Mammary epithelial cell (primary cell): ENCODE measurements at regions of chr17 and their contacts with region 1.

Region 1: DNA sequence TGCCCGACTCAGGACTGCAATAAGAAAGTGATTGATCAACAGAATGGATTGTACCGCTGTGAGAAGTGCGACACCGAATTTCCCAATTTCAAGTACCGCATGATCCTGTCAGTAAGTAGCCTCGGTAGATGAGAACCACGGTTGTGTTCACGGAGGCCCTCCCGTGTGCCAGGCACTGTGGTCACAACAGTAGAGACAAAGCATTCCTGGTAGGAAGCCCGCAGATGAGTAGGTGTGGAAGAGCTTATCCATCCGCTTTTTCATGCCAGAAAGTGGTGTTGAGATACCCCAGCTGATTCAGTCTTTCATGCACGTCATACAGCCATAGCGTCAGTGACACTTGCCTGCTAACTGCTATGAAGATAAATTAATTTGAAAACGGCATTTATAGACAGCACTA is 58.9 kb downstream of the RPA1 start:
- DNase-seq: no peak
- H3K4me3 ChIP-seq: no peak overlapping the region
- H3K27ac ChIP-seq: no peak overlapping the region
- H3K4me1 ChIP-seq: no peaks in the 10 kb centered on the region
- H3K27me3 ChIP-seq: no peaks in the 10 kb centered on the region
- CTCF ChIP-seq: no peak

Region 2: GRCh38 chr17:1847191-1847590 is 41.5 kb before region 1 on chr17:
- CTCF ChIA-PET with region 1: no interaction called
- dilution Hi-C with region 1: loop called (anchors 5 kb)
- in situ Hi-C with region 1: no loop called
- intact Hi-C with region 1: no loop called
- DNase-seq: no peak
- H3K4me3 ChIP-seq: no peak overlapping the region
- H3K27ac ChIP-seq: no peak overlapping the region
- H3K4me1 ChIP-seq: no peaks in the 10 kb centered on the region
- H3K27me3 ChIP-seq: no peaks in the 10 kb centered on the region
- CTCF ChIP-seq: no peak

Region 3: GRCh38 chr17:1920948-1921351 is 32.2 kb after region 1 on chr17:
- CTCF ChIA-PET with region 1: no interaction called
- dilution Hi-C with region 1: no loop called
- in situ Hi-C with region 1: no loop called
- intact Hi-C with region 1: no loop called
- DNase-seq: peak; percentile 15
- H3K4me3 ChIP-seq: no peak overlapping the region
- H3K27ac ChIP-seq: no peak overlapping the region
- H3K4me1 ChIP-seq: no peaks in the 10 kb centered on the region
- H3K27me3 ChIP-seq: no peaks in the 10 kb centered on the region
- CTCF ChIP-seq: no peak

Region 4: DNA sequence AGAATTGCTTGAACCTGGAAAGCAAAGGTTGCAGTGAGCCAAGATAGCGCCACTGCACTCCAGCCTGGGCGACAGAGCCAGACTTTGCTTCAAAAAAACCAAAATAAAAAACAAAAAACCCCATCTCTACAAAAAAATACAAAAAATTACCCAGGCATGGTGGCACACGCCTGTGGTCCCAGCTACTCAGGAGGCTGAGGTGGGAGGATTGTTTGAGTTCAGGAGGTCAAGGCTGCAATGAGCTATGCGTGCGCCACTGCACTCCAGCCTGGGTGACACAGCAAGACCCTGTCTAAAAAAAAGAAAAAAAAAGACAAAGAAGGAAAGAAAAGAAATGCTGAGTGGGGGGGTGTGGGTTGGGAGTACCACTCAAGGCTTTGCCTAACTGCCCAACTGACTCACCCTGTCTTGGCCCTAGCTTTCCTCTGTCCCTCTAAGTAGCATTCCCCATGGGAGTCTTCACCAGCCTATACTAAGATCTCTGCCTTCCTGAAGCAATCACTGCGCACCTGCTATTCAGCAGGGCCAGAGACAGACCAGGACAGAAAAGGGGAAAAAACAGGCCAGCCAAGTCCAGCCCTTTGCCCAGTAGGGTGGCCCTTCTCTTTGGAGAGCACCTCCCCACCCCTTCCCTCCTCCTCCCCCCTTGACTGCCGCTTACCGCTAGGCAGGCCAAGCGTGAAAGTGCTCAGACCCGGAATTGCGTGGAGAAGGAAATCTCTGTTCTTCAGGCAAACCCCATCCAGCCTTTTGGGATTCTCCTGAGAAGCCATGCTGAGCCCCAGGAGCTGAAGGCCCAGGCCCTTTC is 90.6 kb after region 1 on chr17:
- CTCF ChIA-PET with region 1: no interaction called
- dilution Hi-C with region 1: no loop called
- in situ Hi-C with region 1: no loop called
- intact Hi-C with region 1: no loop called
- DNase-seq: no peak
- H3K4me3 ChIP-seq: no peak overlapping the region
- H3K27ac ChIP-seq: no peak overlapping the region
- H3K4me1 ChIP-seq: peaks cover 9% of the 10 kb centered on the region
- H3K27me3 ChIP-seq: peaks cover 6% of the 10 kb centered on the region
- CTCF ChIP-seq: no peak